ENCODE measurements at regions of chr1 and their contacts with region 1.

Region 1: GRCh38 chr1:38474738-38475623 is 384.6 kb downstream of the RRAGC start:
- DNase-seq: peak; percentile 44
- ATAC-seq: peak; percentile 81
- H3K4me3 Mint-ChIP-seq: peak overlapping the region; percentile 91
- H3K27ac Mint-ChIP-seq: peak overlapping the region; percentile 98
- H3K4me1 Mint-ChIP-seq: peaks cover 67% of the 10 kb centered on the region
- H3K27me3 Mint-ChIP-seq: no peaks in the 10 kb centered on the region
- CTCF ChIP-seq: no peak

Region 2: GRCh38 chr1:38052750-38053410 is 422.1 kb before region 1 on chr1:
- CTCF ChIA-PET with region 1: no interaction called
- POLR2A ChIA-PET with region 1: interaction called, 32 read pairs
- intact Hi-C with region 1: loop called (anchors 5 kb)
- DNase-seq: peak; percentile 47
- ATAC-seq: peak; percentile 92
- H3K4me3 Mint-ChIP-seq: peak overlapping the region; percentile 26
- H3K27ac Mint-ChIP-seq: peak overlapping the region; percentile 63
- H3K4me1 Mint-ChIP-seq: peaks cover 35% of the 10 kb centered on the region
- H3K27me3 Mint-ChIP-seq: no peaks in the 10 kb centered on the region
- CTCF ChIP-seq: no peak

Region 3: DNA sequence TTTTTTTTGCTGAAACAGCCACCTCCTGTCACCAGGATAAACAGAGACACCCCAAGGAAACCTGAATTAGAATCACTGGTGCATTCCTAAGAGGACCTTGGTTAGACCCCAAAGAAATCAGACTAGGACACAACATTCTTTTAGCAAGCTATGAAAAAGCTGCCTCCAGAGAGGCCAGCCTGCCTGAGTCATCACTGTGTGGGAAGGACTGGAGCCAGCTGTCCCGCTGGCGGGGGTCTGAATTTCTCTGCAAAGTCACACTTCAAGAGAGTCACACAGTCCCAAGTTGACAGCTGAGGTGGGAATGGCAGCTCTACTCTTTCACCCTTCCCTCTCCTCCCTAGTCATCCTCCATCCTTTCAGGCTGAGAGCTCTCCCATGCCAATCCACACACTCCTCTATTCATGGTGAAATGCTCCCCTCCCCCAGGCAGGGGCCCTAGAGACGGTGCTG is 23.4 kb before region 1 on chr1:
- CTCF ChIA-PET with region 1: no interaction called
- POLR2A ChIA-PET with region 1: interaction called, 14 read pairs
- intact Hi-C with region 1: no loop called
- DNase-seq: no peak
- ATAC-seq: no peak
- H3K4me3 Mint-ChIP-seq: no peak overlapping the region
- H3K27ac Mint-ChIP-seq: no peak overlapping the region
- H3K4me1 Mint-ChIP-seq: no peaks in the 10 kb centered on the region
- H3K27me3 Mint-ChIP-seq: no peaks in the 10 kb centered on the region
- CTCF ChIP-seq: no peak

Region 4: DNA sequence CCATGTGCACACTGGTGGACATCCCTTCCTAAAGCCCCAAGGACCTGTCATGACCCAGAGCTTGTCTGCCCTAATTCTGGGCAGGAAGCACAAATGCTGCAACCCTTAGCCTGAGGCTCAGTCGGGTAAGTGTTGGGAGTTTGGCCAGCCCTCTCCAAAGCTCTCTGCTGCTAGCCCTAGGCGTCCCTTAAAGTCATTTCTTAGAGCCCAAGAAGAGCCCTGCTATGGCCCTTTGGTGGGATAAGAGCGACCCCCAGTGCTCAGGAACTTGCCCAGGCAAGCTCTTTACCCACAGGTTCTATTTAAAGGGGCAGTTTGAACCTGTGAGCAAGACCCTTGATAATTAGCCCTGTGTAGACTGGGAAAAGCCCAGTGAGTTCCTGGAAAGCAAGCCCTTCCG is 27.8 kb after region 1 on chr1:
- CTCF ChIA-PET with region 1: interaction called, 10 read pairs
- POLR2A ChIA-PET with region 1: interaction called, 17 read pairs
- intact Hi-C with region 1: no loop called
- DNase-seq: no peak
- ATAC-seq: peak; percentile 73
- H3K4me3 Mint-ChIP-seq: no peak overlapping the region
- H3K27ac Mint-ChIP-seq: no peak overlapping the region
- H3K4me1 Mint-ChIP-seq: peaks cover 18% of the 10 kb centered on the region
- H3K27me3 Mint-ChIP-seq: peaks cover 16% of the 10 kb centered on the region
- CTCF ChIP-seq: no peak

Region 5: DNA sequence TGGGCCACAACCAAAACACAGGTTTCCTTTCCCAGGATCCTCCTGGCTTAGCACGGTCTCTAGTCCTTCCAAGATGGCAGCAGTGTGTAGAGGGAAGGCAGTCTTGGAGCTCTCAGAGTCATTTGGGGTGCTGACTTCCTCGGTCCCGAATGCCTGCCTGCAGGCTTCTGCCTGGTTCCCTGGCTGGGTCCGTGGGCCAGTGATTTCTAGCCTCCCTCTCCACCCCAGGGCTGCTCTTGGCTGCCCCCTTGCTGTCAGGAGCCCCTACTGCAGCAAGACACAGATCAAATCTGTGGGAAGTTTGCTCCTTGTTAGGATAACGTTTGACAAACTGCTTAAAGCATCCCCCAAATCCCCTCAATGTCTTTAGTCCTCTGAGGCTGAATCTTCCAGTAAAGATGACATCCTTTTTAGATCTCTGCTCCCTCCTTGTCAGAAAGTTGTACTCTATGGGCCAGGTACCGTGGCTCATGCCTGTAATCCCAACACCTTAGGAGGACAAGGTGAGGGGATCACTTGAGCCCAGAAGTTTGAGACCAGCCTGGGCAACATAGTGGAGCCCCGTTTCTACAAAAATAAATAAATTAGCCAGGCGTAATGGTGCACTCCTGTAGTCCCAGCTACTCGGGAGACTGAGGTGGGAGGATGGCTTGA is 112.1 kb after region 1 on chr1:
- CTCF ChIA-PET with region 1: interaction called, 4 read pairs
- POLR2A ChIA-PET with region 1: no interaction called
- intact Hi-C with region 1: loop called (anchors 10 kb)
- DNase-seq: peak; percentile 46
- ATAC-seq: peak; percentile 83
- H3K4me3 Mint-ChIP-seq: no peak overlapping the region
- H3K27ac Mint-ChIP-seq: peak overlapping the region; percentile 33
- H3K4me1 Mint-ChIP-seq: peaks cover 13% of the 10 kb centered on the region
- H3K27me3 Mint-ChIP-seq: no peaks in the 10 kb centered on the region
- CTCF ChIP-seq: no peak

Region 6: GRCh38 chr1:38881487-38881886 is 406.5 kb after region 1 on chr1 and contains the start of gene GJA9:
- CTCF ChIA-PET with region 1: no interaction called
- POLR2A ChIA-PET with region 1: no interaction called
- intact Hi-C with region 1: no loop called
- DNase-seq: no peak
- ATAC-seq: no peak
- H3K4me3 Mint-ChIP-seq: no peak within 1 kb of the TSS
- H3K27ac Mint-ChIP-seq: no peak within 1 kb of the TSS
- H3K4me1 Mint-ChIP-seq: no peaks in the 10 kb centered on the region
- H3K27me3 Mint-ChIP-seq: no peaks in the 10 kb centered on the region
- CTCF ChIP-seq: no peak
- total RNA-seq, gene GJA9: not detected in 2 replicates